HCT116 (cell line): ENCODE measurements at regions of chr12 and their contacts with region 1.

Region 1: GRCh38 chr12:51886021-51886322 is 1.9 kb upstream of the ANKRD33 start:
- DNase-seq: no peak
- ATAC-seq: no peak
- H3K4me3 ChIP-seq: no peak overlapping the region
- H3K27ac ChIP-seq: no peak overlapping the region
- H3K4me1 ChIP-seq: peaks cover 0 to 16% of the 10 kb centered on the region in 2 experiments; a peak in 1 of 4 replicates
- H3K27me3 ChIP-seq: no peaks in the 10 kb centered on the region
- CTCF ChIP-seq: no peak
- POLR2A ChIP-seq: no peak
- RAD21 ChIP-seq: no peak

Region 2: GRCh38 chr12:51871126-51871525 is 14.8 kb before region 1 on chr12:
- CTCF ChIA-PET with region 1: interaction called, 11 read pairs
- POLR2A ChIA-PET with region 1: no interaction called
- RAD21 ChIA-PET with region 1: interaction called in 1 of 2 experiments, 3 read pairs
- intact Hi-C with region 1: no loop called
- DNase-seq: no peak
- ATAC-seq: no peak
- H3K4me3 ChIP-seq: no peak overlapping the region
- H3K27ac ChIP-seq: no peak overlapping the region
- H3K4me1 ChIP-seq: peaks cover 0 to 6% of the 10 kb centered on the region in 2 experiments; a peak in 1 of 4 replicates
- H3K27me3 ChIP-seq: no peaks in the 10 kb centered on the region
- CTCF ChIP-seq: no peak
- POLR2A ChIP-seq: no peak
- RAD21 ChIP-seq: no peak

Region 3: DNA sequence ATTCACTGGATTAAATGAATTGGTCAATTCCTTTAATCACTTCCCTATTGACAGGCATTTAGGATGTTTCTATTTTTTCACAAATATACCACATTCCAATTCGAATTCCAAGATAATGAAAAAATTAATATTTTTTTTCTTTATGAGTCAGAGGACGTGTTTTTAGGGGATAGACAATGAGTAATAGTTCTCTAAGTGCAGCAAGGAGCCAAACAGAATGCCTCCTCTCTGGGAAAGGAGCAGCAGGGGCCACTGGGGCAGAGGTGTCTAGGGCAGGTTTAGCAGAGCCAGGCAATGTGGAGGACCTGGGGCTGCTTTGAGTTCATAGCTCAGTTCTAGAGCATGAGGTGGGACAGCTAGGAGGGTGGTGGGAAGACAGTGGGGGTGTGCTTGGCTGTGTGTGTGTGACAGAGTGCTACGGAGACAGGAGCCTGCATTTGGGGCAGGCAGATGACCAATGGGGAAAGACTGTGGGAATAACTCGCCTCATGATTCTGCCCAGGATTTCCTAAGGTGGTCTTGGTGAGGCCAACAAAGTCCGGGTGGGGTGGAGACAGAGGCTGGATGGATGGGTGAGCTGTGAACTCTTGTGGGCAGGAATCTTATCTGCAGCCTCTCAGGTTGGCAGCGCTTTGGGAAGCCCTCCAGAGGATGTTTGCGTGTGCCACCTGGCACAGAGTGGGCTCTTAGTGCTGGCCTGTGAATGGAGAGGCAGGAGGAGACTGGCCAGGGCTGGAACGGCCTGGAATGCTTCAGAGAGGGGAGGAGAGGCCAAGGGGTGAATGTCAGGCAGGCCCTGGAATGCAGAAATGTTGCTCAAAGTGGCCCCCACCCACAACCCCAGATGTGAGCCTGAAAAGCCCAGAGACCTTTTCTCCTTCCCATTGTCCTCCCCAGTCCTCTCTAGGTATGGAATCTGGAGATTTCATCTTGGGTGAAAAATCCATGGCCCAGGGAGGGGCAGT is 344.6 kb after region 1 on chr12:
- CTCF ChIA-PET with region 1: no interaction called
- POLR2A ChIA-PET with region 1: no interaction called
- RAD21 ChIA-PET with region 1: no interaction called
- intact Hi-C with region 1: no loop called
- DNase-seq: no peak
- ATAC-seq: peak; percentile 69
- H3K4me3 ChIP-seq: peak overlapping the region in 1 of 2 experiments; percentile 38; a peak in 2 of 4 replicates
- H3K27ac ChIP-seq: peak overlapping the region; percentile 56
- H3K4me1 ChIP-seq: peaks cover 31 to 93% of the 10 kb centered on the region in 2 experiments
- H3K27me3 ChIP-seq: no peaks in the 10 kb centered on the region
- CTCF ChIP-seq: no peak
- POLR2A ChIP-seq: no peak
- RAD21 ChIP-seq: no peak